Activated naive CD4-positive, alpha-beta T cell treated with anti-CD3 and anti-CD28 coated beads, Interleukin-2, amount 10 ng/mL, durations not matched to agents 7 days and 5 days (primary cell): ENCODE measurements at regions of chr20 and their contacts with region 1.

Region 1: DNA sequence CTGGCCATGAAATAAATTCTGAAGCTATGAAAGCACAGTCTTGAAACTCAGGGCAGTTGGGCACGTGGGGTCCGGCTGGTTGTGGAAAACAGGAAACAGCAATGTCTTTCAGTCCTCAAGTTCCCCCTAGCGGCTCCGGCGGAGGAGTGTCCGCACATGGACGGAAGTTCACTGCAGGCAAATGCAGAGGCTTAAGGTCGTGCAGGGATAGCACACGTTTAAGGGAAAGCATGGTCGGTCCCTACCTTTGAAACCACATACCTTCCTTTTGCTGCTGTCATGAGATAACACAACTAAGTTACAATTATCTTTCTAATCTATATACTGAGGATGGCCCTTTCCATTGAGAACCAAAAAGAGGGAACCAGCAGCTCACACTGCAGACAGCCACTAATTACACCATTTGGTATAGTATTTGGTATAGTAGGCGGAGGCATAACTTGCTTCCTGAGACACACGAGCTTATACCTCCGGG is 52.6 kb upstream of the NFATC2 start:
- DNase-seq: peak; percentile 87
- H3K4me3 Mint-ChIP-seq: no peak overlapping the region
- H3K27ac Mint-ChIP-seq: peak overlapping the region; percentile 70
- H3K4me1 Mint-ChIP-seq: peaks cover 18% of the 10 kb centered on the region
- H3K27me3 Mint-ChIP-seq: peaks cover 27% of the 10 kb centered on the region

Region 2: DNA sequence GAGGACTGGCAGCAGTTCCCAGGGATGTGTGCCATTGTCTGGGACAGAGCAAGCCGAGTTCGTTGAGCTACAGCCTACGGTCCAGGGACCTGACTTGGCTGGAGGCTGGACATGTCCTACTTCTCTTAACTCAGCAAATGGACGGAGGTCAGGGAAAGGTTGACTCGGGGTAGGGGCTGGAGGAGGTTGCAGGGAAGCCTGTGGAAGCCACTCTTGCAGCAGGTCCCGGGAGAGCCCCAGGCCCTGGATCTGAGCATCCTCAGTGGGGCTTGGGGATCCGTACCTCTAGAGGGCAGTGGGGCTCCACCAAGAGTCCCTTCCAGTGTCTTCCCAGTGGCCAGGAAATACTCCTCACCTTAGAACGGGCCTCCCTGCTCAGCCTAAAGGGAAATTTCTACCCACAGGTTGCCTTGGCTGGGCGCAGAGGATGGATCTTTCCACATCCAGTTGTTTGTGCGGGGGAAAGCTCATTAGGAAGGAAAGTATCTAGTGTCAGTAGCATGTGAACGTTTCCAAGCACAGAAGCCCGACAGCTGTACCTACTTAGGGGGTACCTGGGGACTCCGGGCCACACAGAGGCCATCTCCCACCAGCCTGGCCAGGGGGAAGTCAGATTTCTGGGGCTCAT is 222.8 kb before region 1 on chr20:
- CTCF ChIA-PET with region 1: interaction called, 28 read pairs
- DNase-seq: peak; percentile 70
- H3K4me3 Mint-ChIP-seq: no peak overlapping the region
- H3K27ac Mint-ChIP-seq: no peak overlapping the region
- H3K4me1 Mint-ChIP-seq: peaks cover 8% of the 10 kb centered on the region
- H3K27me3 Mint-ChIP-seq: peaks cover 9% of the 10 kb centered on the region

Region 3: GRCh38 chr20:51378171-51378929 is 216.7 kb before region 1 on chr20:
- CTCF ChIA-PET with region 1: interaction called, 28 read pairs
- DNase-seq: peak; percentile 40
- H3K4me3 Mint-ChIP-seq: no peak overlapping the region
- H3K27ac Mint-ChIP-seq: no peak overlapping the region
- H3K4me1 Mint-ChIP-seq: peaks cover 8% of the 10 kb centered on the region
- H3K27me3 Mint-ChIP-seq: no peaks in the 10 kb centered on the region